ENCODE measurements at regions of chr1 and their contacts with region 1.

Region 1: DNA sequence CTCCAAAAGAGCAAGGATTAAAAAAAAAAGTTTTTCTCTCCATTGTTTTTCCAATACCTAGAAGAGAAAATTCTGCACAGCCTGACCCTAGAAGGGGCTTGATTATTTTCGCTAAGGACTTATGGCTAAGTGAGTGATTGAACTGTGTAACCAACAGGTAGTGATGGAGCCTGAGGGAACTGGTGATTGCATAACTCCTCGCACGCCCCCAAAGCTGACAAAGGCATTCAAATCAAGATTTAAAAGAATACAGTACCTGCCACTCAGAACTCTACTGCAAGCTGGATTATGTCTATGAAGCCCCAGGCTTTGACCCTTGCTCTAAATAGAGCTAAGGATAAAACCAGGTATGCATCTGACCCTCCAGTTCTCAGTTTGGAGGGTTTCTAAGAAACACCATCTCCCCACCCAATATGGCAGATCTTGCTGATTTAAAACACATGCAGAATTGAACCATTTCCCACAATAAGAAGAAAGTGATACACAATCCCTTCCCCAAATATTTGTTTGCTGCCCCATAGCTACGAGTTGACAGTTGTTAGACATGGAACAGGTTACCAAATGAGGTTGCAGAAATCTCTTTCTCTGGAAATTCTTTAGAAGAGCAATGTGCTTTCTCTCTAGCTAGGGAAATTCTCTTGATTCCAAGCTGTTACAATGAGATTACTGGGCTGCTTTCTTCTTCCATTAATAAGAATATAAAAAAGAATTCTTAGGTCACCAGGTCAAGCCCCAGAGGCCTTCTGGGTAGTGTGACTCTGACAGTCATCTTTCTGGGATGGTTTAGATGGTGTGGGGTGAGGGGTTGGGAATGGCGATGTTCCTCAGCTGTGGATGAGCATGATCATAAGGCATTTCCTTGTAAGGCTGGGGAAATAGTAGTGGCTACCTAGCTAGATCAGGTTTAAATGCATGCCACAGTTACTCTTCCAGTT is 35.1 kb downstream of the FGGY start:
- DNase-seq: no peak
- ATAC-seq: no peak
- H3K4me3 ChIP-seq: no peak overlapping the region
- H3K27ac ChIP-seq: no peak overlapping the region
- H3K4me1 ChIP-seq: no peaks in the 10 kb centered on the region
- CTCF ChIP-seq: no peak
- EP300 ChIP-seq: no peak
- POLR2A ChIP-seq: no peak
- RAD21 ChIP-seq: no peak

Region 2: GRCh38 chr1:59309795-59310548 is 22.0 kb before region 1 on chr1:
- CTCF ChIA-PET with region 1: no interaction called
- POLR2A ChIA-PET with region 1: interaction called, 10 read pairs
- DNase-seq: no peak
- ATAC-seq: no peak
- H3K4me3 ChIP-seq: no peak overlapping the region
- H3K27ac ChIP-seq: no peak overlapping the region
- H3K4me1 ChIP-seq: no peaks in the 10 kb centered on the region
- CTCF ChIP-seq: no peak
- EP300 ChIP-seq: no peak
- POLR2A ChIP-seq: no peak
- RAD21 ChIP-seq: no peak